Activated naive CD4-positive, alpha-beta T cell treated with anti-CD3 and anti-CD28 coated beads for 36 hours (primary cell): ENCODE measurements at regions of chr3 and their contacts with region 1.

Region 1: DNA sequence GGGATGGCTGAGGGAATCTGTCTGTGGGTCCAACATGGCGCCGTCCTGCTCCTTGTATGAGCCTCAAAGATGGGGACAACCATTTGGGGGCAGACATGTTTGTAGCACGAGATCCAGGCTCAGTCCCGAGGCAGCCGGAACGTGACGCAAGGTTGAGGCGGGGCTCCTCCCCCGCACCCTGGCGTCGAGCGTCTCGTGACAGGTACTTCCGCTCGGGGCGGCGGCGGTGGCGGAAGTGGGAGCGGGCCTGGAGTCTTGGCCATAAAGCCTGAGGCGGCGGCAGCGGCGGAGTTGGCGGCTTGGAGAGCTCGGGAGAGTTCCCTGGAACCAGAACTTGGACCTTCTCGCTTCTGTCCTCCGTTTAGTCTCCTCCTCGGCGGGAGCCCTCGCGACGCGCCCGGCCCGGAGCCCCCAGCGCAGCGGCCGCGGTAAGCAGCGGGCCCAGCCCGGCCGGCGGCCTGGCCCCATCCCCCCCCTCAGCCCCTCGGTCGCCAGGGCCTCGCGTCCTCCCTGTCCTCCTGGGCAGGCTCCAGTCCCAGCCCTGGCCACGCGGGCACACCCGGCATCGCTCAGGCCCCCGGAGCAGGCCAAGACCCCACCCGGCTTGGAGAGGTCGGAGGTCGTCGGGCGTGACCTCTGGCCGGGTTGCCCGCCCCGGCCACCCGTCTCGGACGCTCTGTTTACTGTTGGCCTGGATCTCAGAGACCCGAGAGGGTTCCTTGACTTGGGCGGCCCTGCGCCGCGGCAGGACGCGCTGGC is at the start of gene RAB7A:
- DNase-seq: peak; percentile 99
- H3K4me3 Mint-ChIP-seq: peak within 1 kb of the TSS; percentile 81
- H3K27ac Mint-ChIP-seq: peak within 1 kb of the TSS; percentile 89
- H3K4me1 Mint-ChIP-seq: peaks cover 53% of the 10 kb centered on the region
- H3K27me3 Mint-ChIP-seq: no peaks in the 10 kb centered on the region
- total RNA-seq, gene RAB7A: 222 to 228 TPM

Region 2: GRCh38 chr3:128572644-128573105 is 153.4 kb before region 1 on chr3:
- CTCF ChIA-PET with region 1: no interaction called
- intact Hi-C with region 1: loop called (anchors 2 kb)
- DNase-seq: peak; percentile 83
- H3K4me3 Mint-ChIP-seq: peak overlapping the region; percentile 13
- H3K27ac Mint-ChIP-seq: peak overlapping the region; percentile 43
- H3K4me1 Mint-ChIP-seq: peaks cover 18% of the 10 kb centered on the region
- H3K27me3 Mint-ChIP-seq: peaks cover 17% of the 10 kb centered on the region

Region 3: DNA sequence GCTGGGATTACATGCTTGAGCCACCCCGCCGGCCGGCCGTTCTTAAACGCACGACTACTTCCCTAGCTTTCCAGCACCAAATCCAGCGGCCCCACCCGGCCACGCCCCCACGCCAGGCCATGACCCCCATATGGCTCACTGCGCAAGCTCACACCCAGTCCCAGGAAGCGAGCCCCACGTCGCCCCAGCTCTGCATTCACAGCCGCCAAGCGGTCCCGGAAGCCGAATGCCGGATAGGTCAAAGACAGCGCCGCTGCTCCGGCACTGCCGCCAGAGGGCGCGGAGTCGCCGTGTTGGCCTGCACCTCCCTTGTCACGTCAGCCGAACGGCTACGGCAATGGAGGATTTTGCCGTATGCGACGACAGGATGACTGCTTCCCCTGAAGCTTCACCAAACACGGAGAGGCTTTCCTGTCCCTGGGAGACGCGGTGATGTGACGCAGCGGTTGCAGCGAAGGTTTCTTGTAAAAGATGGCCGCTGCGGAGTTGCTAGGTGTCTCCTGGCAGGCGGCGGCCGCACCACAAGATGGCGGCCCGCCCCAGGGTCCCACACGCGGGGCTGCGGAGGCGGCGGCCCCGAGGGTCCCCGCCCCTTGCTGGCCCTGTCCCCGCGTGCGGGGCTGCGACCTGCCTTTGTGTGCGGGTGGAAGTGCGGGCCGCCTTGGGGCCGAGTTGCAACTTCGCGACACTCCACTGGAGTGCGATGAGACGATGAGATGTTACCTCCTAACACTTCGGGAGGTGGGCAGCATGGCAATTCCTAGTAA is 45.3 kb before region 1 on chr3:
- CTCF ChIA-PET with region 1: interaction called, 11 read pairs
- intact Hi-C with region 1: loop called (anchors 1 kb)
- DNase-seq: peak; percentile 98
- H3K4me3 Mint-ChIP-seq: peak overlapping the region; percentile 86
- H3K27ac Mint-ChIP-seq: peak overlapping the region; percentile 99
- H3K4me1 Mint-ChIP-seq: peaks cover 23% of the 10 kb centered on the region
- H3K27me3 Mint-ChIP-seq: no peaks in the 10 kb centered on the region

Region 4: GRCh38 chr3:128787256-128788240 is 61.4 kb after region 1 on chr3:
- CTCF ChIA-PET with region 1: interaction called, 5 read pairs
- intact Hi-C with region 1: loop called (anchors 1 kb)
- DNase-seq: peak; percentile 69
- H3K4me3 Mint-ChIP-seq: peak overlapping the region; percentile 76
- H3K27ac Mint-ChIP-seq: peak overlapping the region; percentile 99
- H3K4me1 Mint-ChIP-seq: peaks cover 98% of the 10 kb centered on the region
- H3K27me3 Mint-ChIP-seq: no peaks in the 10 kb centered on the region

Region 5: DNA sequence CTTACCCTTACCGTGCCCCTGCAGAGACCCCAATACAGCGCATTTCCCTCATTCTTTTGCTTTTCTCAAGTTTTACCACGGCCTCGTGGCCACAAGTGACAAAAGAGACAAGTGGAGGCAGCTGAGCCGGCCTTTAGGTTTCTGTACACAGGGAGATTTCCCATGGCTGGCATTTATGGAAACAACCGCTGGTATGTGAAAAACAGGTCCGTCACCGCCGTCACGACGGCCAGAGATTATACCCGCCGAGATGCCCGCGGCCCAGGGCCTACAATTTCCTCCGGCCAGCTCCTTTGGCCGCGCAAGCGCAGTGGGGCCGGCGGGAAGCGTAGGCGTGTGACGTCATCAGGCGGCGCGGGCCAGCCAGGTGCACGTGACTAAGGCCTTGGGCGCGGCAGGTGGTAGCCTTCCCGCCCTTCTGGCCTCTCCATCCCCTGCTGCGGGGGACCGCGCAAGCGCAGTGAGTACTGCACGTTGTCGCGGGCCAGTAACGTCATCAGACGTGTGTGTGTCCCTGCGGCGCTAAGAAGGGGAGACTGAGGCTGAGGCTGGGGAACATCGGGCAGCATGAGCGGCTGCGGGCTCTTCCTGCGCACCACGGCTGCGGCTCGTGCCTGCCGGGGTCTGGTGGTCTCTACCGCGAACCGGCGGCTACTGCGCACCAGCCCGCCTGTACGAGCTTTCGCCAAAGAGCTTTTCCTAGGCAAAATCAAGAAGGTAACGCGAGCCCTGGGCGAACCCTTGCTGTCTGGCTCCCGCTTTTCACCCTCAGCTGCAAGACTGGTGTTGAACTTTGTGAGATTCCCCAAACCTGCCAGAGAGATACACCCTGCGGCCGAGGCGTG is 153.2 kb after region 1 on chr3 and contains the start of gene ACAD9:
- CTCF ChIA-PET with region 1: no interaction called
- intact Hi-C with region 1: loop called (anchors 1 kb)
- DNase-seq: peak; percentile 96
- H3K4me3 Mint-ChIP-seq: peak within 1 kb of the TSS; percentile 84
- H3K27ac Mint-ChIP-seq: peak within 1 kb of the TSS; percentile 90
- H3K4me1 Mint-ChIP-seq: peaks cover 67% of the 10 kb centered on the region
- H3K27me3 Mint-ChIP-seq: no peaks in the 10 kb centered on the region
- total RNA-seq, gene ACAD9: 37.0 to 40.6 TPM

Region 6: DNA sequence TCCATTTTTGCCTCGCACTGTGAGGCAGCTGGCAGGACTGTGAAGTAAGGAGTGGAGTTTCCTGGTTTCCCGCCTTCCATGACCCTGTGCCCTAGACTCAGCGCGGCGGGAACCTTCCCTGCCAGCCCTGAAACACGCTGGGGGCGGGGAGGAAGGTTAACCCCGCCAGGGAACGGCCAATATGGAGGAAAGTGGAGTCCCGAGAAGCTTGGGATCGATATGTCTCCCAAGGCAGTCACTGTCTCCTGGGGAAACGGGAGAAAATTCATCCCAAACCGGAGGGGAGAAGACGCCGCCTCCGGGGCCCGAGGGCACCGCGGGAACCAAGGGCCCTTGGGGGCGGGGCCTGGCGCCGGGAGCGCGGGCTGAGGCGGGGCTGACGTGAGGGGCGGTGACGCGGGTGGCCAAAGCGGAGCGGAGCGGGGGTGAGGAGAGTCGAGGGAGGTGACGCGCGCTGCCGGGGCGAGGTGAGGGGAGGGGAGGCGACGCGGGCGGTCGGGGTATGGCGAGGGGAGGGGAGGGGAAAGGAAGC is 552.4 kb after region 1 on chr3 and contains the start of gene HMCES:
- CTCF ChIA-PET with region 1: no interaction called
- intact Hi-C with region 1: loop called (anchors 1 kb)
- DNase-seq: peak; percentile 96
- H3K4me3 Mint-ChIP-seq: peak within 1 kb of the TSS; percentile 87
- H3K27ac Mint-ChIP-seq: peak within 1 kb of the TSS; percentile 90
- H3K4me1 Mint-ChIP-seq: peaks cover 48% of the 10 kb centered on the region
- H3K27me3 Mint-ChIP-seq: no peaks in the 10 kb centered on the region
- total RNA-seq, gene HMCES: 35.0 to 35.8 TPM